ENCODE measurements at regions of chr9 and their contacts with region 1.

Region 1: DNA sequence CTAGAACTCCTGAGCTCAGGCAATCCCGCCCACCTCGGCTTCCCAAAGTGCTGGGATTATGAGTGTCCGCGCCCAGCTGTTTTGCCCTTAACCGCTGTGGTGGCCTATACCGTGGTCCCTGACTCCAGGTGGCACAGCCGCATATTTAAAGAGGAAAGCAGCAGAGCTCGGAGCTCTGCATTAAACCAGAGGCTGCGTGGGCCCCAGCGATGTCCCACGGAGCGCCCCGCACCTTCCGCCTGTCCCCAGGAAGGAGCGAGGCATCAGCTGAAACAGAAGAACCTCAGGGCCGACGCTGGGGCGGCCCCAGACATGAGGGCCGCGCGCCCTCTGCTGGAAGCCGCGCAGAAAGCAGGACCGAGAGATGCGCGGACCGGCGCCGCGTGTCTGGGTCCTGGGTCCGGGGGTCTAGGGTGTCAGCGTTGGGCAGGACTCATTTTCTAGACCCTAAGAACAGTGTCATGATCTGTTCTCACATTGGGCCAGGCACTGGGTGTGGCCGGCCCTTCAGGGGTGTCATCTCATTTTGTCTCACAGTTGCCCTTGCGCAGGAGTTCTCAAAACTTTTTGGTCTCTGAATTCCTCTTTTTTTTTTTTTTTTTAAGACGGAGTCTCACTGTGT is 37.7 kb downstream of the LAMC3 start:
- DNase-seq: no peak
- H3K4me3 ChIP-seq: no peak overlapping the region
- CTCF ChIP-seq: peak; percentile 97

Region 2: GRCh38 chr9:130320723-130321481 is 725.8 kb before region 1 on chr9:
- CTCF ChIA-PET with region 1: no interaction called
- POLR2A ChIA-PET with region 1: no interaction called
- DNase-seq: no peak
- H3K4me3 ChIP-seq: no peak overlapping the region
- CTCF ChIP-seq: no peak

Region 3: DNA sequence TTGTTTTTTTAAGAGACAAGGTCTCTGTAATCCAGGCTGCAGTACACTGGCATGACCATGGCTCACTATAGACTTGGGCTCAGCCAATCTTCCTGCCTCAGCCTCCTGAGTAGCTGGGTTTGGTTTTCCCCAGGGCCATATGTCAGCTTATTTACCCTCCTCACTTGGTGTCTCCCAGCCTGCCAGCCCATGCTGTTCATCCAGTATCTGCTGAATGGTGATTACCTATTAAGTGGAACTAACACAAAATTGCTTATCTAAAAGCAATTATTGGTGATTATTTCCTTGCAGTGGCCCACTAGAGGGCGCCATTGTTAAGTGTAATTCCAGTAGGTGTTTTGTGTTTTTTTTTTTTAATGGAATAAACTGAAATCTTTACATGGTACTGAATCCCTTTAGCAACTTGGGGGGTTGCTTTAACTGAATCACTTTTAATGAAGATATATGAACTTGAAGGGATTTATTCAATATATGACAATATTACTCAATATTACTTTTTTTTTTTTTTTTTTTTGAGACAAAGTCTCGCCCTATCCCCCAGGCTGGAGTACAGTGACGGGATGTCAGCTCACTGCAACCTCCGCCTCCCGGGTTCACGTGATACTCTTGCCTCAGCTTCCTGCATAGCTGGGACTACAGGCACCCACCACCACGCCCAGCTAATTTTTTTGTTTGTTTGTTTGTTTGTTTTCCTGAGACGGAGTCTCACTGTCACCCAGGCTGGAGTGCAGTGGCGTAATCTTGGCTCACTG is 339.3 kb before region 1 on chr9:
- CTCF ChIA-PET with region 1: interaction called, 27 read pairs
- POLR2A ChIA-PET with region 1: no interaction called
- DNase-seq: no peak
- H3K4me3 ChIP-seq: no peak overlapping the region
- CTCF ChIP-seq: peak; percentile 46

Region 4: DNA sequence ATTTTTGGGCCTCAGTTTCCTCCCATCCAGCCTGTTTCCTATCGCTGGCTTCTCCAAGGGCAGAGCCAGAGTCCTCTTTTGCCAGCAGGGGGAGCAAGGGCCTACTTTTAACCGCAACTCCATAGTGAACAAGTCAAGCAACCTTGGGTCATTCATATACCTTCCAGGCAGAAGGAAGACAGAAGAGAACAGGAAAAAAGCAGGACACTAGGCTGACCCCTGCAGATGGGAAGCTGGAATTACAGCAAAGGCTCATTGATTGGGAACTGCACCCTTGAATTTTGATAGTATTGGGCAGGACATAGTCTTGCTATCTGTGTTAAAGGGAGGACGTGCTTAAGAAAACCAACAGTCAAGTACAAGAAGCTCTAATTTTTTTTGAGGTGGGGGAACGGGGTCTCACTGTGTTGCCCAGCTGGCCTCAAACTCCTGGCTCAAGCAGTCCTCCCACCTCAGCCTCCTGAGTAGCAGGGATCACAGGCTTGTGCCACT is 180.2 kb before region 1 on chr9:
- CTCF ChIA-PET with region 1: interaction called, 197 read pairs
- POLR2A ChIA-PET with region 1: no interaction called
- DNase-seq: peak; percentile 42
- H3K4me3 ChIP-seq: peak overlapping the region; percentile 45
- CTCF ChIP-seq: peak; percentile 84

Region 5: GRCh38 chr9:130893341-130894101 is 153.2 kb before region 1 on chr9:
- CTCF ChIA-PET with region 1: interaction called, 10 read pairs
- POLR2A ChIA-PET with region 1: no interaction called
- DNase-seq: no peak
- H3K4me3 ChIP-seq: no peak overlapping the region
- CTCF ChIP-seq: peak; percentile 24

Region 6: GRCh38 chr9:130936298-130937117 is 110.2 kb before region 1 on chr9:
- CTCF ChIA-PET with region 1: interaction called, 14 read pairs
- POLR2A ChIA-PET with region 1: no interaction called
- DNase-seq: peak; percentile 34
- H3K4me3 ChIP-seq: no peak overlapping the region
- CTCF ChIP-seq: no peak

Region 7: DNA sequence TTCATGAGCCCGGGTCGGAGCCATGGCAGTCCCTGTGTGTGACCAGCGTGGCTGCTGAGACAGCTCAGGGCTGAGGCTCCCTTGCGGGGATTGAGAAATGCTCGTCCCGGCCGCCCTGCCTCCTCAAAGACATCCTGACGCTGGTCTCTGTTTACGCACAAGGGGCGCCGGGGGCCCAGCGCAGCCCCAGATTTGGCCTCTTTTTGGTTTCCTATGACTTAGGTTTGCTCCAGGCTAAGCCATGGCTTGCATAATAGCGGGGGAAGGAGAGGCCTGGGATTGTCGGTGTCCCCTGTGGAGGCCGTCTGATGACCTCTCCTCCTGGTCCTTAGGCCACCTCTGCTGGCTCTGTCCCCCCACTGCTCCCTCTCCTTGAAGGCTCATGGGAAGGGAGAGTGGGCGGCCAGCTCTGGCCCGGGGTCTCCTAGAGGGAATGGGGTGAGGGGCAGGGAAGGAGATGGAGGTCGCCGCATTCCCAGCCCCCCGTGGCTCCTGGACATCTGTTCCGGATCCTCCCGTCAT is 34.2 kb before region 1 on chr9:
- CTCF ChIA-PET with region 1: interaction called, 14 read pairs
- POLR2A ChIA-PET with region 1: no interaction called
- DNase-seq: no peak
- H3K4me3 ChIP-seq: no peak overlapping the region
- CTCF ChIP-seq: no peak

Region 8: GRCh38 chr9:131062969-131063368 is 16.3 kb after region 1 on chr9:
- CTCF ChIA-PET with region 1: interaction called, 34 read pairs
- POLR2A ChIA-PET with region 1: no interaction called
- DNase-seq: no peak
- H3K4me3 ChIP-seq: no peak overlapping the region
- CTCF ChIP-seq: no peak